Naive thymus-derived CD4-positive, alpha-beta T cell (primary cell): ENCODE measurements at regions of chr16 and their contacts with region 1.

Region 1: GRCh38 chr16:67806428-67807147 is at the starts of genes RANBP10 and TSNAXIP1:
- DNase-seq: peak; percentile 91 to 99 (median 97)
- ATAC-seq: peak; percentile 96
- H3K4me3 ChIP-seq: peak within 1 kb of the TSS; percentile 88
- H3K4me3 Mint-ChIP-seq: peak within 1 kb of the TSS; percentile 75 to 97 (median 94)
- H3K27ac ChIP-seq: peak within 1 kb of the TSS; percentile 89
- H3K27ac Mint-ChIP-seq: peak within 1 kb of the TSS; percentile 74 to 97 (median 95)
- H3K4me1 ChIP-seq: peaks cover 29 to 43% of the 10 kb centered on the region in 2 donors
- H3K4me1 Mint-ChIP-seq: peaks cover 13 to 49% (median 42%) of the 10 kb centered on the region in 7 donors
- H3K27me3 ChIP-seq: no peaks in the 10 kb centered on the region
- H3K27me3 Mint-ChIP-seq: peaks cover 0 to under 1% (median 0%) of the 10 kb centered on the region in 5 donors
- total RNA-seq, gene RANBP10: 22.3 to 26.6 (median 24.7) TPM
- total RNA-seq, gene TSNAXIP1: 0.24 to 1.1 (median 0.54) TPM

Region 2: GRCh38 chr16:67537270-67537635 is 269.3 kb before region 1 on chr16:
- CTCF ChIA-PET with region 1: no interaction called
- POLR2A ChIA-PET with region 1: no interaction called
- intact Hi-C with region 1: loop called in 1 of 2 experiments (anchors 5 kb)
- DNase-seq: peak in 2 of 9 donors; percentile 58 to 69
- ATAC-seq: peak; percentile 63
- H3K4me3 ChIP-seq: peak overlapping the region; percentile 68
- H3K4me3 Mint-ChIP-seq: peak overlapping the region; percentile 68 to 91 (median 85)
- H3K27ac ChIP-seq: peak overlapping the region; percentile 82
- H3K27ac Mint-ChIP-seq: peak overlapping the region; percentile 54 to 91 (median 82)
- H3K4me1 ChIP-seq: peaks cover 6% of the 10 kb centered on the region in 2 donors
- H3K4me1 Mint-ChIP-seq: peaks cover 29 to 51% (median 42%) of the 10 kb centered on the region in 7 donors
- H3K27me3 ChIP-seq: no peaks in the 10 kb centered on the region
- H3K27me3 Mint-ChIP-seq: peaks cover 0 to 42% (median 0%) of the 10 kb centered on the region in 5 donors

Region 3: GRCh38 chr16:67667817-67668494 is 138.6 kb before region 1 on chr16:
- CTCF ChIA-PET with region 1: no interaction called
- POLR2A ChIA-PET with region 1: no interaction called
- intact Hi-C with region 1: loop called (anchors 1 kb)
- DNase-seq: peak; percentile 61 to 88 (median 82)
- ATAC-seq: peak; percentile 93
- H3K4me3 ChIP-seq: peak overlapping the region; percentile 56
- H3K4me3 Mint-ChIP-seq: peak overlapping the region; percentile 42 to 96 (median 82)
- H3K27ac ChIP-seq: peak overlapping the region; percentile 73
- H3K27ac Mint-ChIP-seq: peak overlapping the region in 6 of 9 donors; percentile 31 to 67 (median 58)
- H3K4me1 ChIP-seq: peaks cover 9 to 12% of the 10 kb centered on the region in 2 donors
- H3K4me1 Mint-ChIP-seq: peaks cover 10 to 32% (median 17%) of the 10 kb centered on the region in 7 donors
- H3K27me3 ChIP-seq: no peaks in the 10 kb centered on the region
- H3K27me3 Mint-ChIP-seq: no peaks in the 10 kb centered on the region

Region 4: GRCh38 chr16:67833418-67834241 is 27.0 kb after region 1 on chr16:
- CTCF ChIA-PET with region 1: no interaction called
- POLR2A ChIA-PET with region 1: interaction called, 6 read pairs
- intact Hi-C with region 1: loop called (anchors 1 to 2 kb)
- DNase-seq: peak; percentile 83 to 92 (median 89)
- ATAC-seq: peak; percentile 100
- H3K4me3 ChIP-seq: peak overlapping the region; percentile 82
- H3K4me3 Mint-ChIP-seq: peak overlapping the region; percentile 90 to 96 (median 93)
- H3K27ac ChIP-seq: peak overlapping the region; percentile 70
- H3K27ac Mint-ChIP-seq: peak overlapping the region; percentile 73 to 93 (median 82)
- H3K4me1 ChIP-seq: peaks cover 8 to 9% of the 10 kb centered on the region in 2 donors
- H3K4me1 Mint-ChIP-seq: peaks cover 11 to 19% (median 15%) of the 10 kb centered on the region in 7 donors
- H3K27me3 ChIP-seq: no peaks in the 10 kb centered on the region
- H3K27me3 Mint-ChIP-seq: no peaks in the 10 kb centered on the region

Region 5: GRCh38 chr16:67892899-67893742 is 86.5 kb after region 1 on chr16 and contains the start of gene PSKH1:
- CTCF ChIA-PET with region 1: no interaction called
- POLR2A ChIA-PET with region 1: interaction called, 5 read pairs
- intact Hi-C with region 1: loop called (anchors 1 kb)
- DNase-seq: peak; percentile 77 to 92 (median 84)
- ATAC-seq: peak; percentile 99
- H3K4me3 ChIP-seq: peak within 1 kb of the TSS; percentile 89
- H3K4me3 Mint-ChIP-seq: peak within 1 kb of the TSS; percentile 86 to 97 (median 94)
- H3K27ac ChIP-seq: peak within 1 kb of the TSS; percentile 94
- H3K27ac Mint-ChIP-seq: peak within 1 kb of the TSS; percentile 85 to 98 (median 97)
- H3K4me1 ChIP-seq: peaks cover 12 to 15% of the 10 kb centered on the region in 2 donors
- H3K4me1 Mint-ChIP-seq: peaks cover 22 to 48% (median 35%) of the 10 kb centered on the region in 7 donors
- H3K27me3 ChIP-seq: no peaks in the 10 kb centered on the region
- H3K27me3 Mint-ChIP-seq: no peaks in the 10 kb centered on the region
- total RNA-seq, gene PSKH1: 18.0 to 28.5 (median 23.3) TPM

Region 6: DNA sequence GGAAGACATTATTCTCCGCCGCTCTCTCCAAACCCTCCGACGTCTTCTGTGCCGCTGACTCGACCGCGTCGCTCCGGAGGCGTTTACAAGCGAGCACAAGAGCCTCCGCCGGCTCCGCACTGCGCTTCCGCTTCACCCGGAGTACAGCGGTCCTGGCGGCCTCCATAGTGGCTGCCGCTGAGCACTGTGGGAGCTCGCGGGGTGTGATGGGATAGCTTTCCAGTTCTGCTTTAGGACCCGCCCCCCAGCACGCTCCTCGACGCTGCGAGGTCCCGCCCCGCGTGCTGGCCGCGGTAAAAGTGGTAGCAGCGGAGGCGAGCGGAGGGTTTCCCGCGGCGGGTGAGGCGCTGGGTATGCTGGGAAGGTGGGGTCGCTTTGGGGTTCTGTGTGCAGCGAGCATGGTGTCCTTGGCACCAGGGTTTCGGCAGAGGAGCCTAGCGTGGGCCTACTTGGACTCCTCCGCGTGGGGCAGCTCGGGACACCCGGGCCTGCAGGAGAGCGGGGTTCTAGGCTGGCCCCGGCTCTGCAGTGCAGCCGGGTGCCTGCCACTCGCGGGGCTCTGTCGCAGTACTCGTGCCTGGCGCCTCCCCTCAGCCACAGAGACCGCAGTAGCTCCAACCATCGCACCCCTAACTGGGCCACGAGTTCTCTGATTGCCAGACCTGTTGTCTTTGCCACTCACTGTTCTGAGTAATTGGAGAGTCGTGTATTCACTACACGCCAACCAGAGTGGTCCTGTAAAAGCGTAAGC is 504.3 kb after region 1 on chr16 and contains the starts of genes PRMT7 and SLC7A6OS:
- CTCF ChIA-PET with region 1: no interaction called
- POLR2A ChIA-PET with region 1: interaction called, 5 read pairs
- intact Hi-C with region 1: loop called in 1 of 2 experiments (anchors 2 kb)
- DNase-seq: peak; percentile 77 to 94 (median 92)
- ATAC-seq: peak; percentile 99
- H3K4me3 ChIP-seq: peak within 1 kb of the TSS; percentile 99
- H3K4me3 Mint-ChIP-seq: peak within 1 kb of the TSS; percentile 88 to 100 (median 98)
- H3K27ac ChIP-seq: peak within 1 kb of the TSS; percentile 91
- H3K27ac Mint-ChIP-seq: peak within 1 kb of the TSS; percentile 77 to 99 (median 96)
- H3K4me1 ChIP-seq: peaks cover 25 to 32% of the 10 kb centered on the region in 2 donors
- H3K4me1 Mint-ChIP-seq: peaks cover 33 to 69% (median 59%) of the 10 kb centered on the region in 7 donors
- H3K27me3 ChIP-seq: no peaks in the 10 kb centered on the region
- H3K27me3 Mint-ChIP-seq: no peaks in the 10 kb centered on the region
- total RNA-seq, gene PRMT7: 60.8 to 95.1 (median 89.4) TPM
- total RNA-seq, gene SLC7A6OS: 31.4 to 50.3 (median 34.8) TPM